ENCODE measurements at regions of chr9 and their contacts with region 1.

Region 1: GRCh38 chr9:77433675-77434445 is 214.3 kb downstream of the GNA14 start:
- DNase-seq: peak; percentile 33
- ATAC-seq: peak; percentile 99
- H3K4me3 ChIP-seq: no peak overlapping the region
- H3K27ac ChIP-seq: no peak overlapping the region
- H3K4me1 ChIP-seq: no peaks in the 10 kb centered on the region
- H3K27me3 ChIP-seq: no peaks in the 10 kb centered on the region
- CTCF ChIP-seq: peak; percentile 69 to 98 (median 98)
- POLR2A ChIP-seq: no peak
- RAD21 ChIP-seq: peak; percentile 90

Region 2: DNA sequence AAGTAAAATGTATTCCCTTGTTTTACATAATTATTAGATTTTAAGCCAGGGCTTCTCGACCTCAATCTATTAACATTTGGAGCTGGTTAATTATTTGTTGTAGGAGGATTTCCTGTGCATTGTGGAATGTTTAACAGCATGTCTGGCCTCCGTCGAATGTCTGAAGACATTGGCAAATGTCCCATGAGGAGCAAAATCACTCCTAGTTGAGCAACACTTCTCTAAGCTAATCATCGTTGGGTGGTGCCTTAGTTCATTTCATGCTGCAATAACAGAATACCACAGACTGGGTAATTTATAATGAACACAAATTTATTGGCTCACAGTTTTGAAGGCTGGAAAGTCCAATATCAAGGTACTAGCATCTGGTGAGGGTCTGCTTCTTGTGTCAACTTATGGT is 270.0 kb before region 1 on chr9:
- CTCF ChIA-PET with region 1: no interaction called
- POLR2A ChIA-PET with region 1: no interaction called
- RAD21 ChIA-PET with region 1: no interaction called
- intact Hi-C with region 1: loop called (anchors 10 kb)
- DNase-seq: no peak
- ATAC-seq: no peak
- H3K4me3 ChIP-seq: no peak overlapping the region
- H3K27ac ChIP-seq: no peak overlapping the region
- H3K4me1 ChIP-seq: no peaks in the 10 kb centered on the region
- H3K27me3 ChIP-seq: no peaks in the 10 kb centered on the region
- CTCF ChIP-seq: no peak
- POLR2A ChIP-seq: no peak
- RAD21 ChIP-seq: no peak

Region 3: DNA sequence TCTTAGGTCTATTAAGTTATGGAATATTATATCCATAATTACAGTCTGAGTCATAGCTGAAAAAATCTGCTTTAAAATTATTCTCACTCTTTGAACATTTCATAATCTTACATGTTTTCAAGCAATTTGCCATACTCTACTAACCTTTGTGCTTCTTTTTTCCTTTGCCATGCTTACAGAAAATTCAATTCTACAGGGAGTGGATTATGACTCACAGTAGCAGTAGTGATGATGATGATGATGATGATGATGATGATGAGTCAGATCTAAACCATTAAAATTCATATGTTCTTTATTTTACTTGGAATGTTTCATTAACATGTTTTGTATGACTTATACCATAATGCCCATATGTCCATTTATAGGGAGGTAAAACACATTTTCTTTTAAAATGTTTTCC is 49.5 kb before region 1 on chr9:
- CTCF ChIA-PET with region 1: no interaction called
- POLR2A ChIA-PET with region 1: no interaction called
- RAD21 ChIA-PET with region 1: no interaction called
- intact Hi-C with region 1: no loop called
- DNase-seq: no peak
- ATAC-seq: no peak
- H3K4me3 ChIP-seq: no peak overlapping the region
- H3K27ac ChIP-seq: no peak overlapping the region
- H3K4me1 ChIP-seq: no peaks in the 10 kb centered on the region
- H3K27me3 ChIP-seq: no peaks in the 10 kb centered on the region
- CTCF ChIP-seq: no peak
- POLR2A ChIP-seq: no peak
- RAD21 ChIP-seq: no peak

Region 4: DNA sequence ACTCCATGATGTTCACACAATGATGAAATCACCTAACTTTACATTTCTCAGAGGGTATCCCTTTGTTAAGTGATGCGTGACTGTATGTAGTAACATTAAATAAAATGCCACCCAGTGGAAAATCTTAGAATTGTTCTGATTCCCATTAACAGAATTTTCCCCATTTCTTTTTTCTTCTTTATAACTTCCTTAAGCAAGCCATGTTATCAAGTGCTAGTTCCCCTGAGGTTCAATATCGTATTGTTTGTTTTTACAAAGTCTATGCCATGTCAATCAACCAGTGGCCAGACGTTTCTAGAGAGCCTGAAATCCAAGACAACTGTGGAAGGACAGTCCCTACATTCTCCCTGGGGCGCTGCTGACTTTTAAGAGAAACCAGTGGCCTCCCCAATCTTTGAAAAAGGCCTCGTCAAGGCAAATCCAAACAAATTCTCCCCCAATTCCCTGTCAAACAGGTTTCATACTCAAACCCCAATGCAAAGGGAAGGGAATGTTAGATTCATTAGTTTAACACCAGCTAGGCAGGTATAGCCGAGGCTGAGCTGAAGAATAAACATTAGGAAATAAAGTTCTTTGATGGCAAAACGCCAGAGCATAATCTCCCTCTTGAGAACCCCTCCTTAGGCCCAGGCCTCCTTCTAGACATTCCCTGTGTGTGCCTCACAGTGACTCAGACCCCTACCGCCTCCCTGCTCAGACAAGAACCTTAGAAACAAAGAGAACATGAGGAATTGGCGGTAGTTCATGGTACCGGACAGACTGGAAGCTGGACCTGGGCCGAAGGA is 15.6 kb after region 1 on chr9:
- CTCF ChIA-PET with region 1: interaction called, 20 read pairs
- POLR2A ChIA-PET with region 1: no interaction called
- RAD21 ChIA-PET with region 1: no interaction called
- intact Hi-C with region 1: no loop called
- DNase-seq: no peak
- ATAC-seq: no peak; the same call in 1 of the 2 replicates
- H3K4me3 ChIP-seq: no peak overlapping the region
- H3K27ac ChIP-seq: no peak overlapping the region
- H3K4me1 ChIP-seq: no peaks in the 10 kb centered on the region
- H3K27me3 ChIP-seq: no peaks in the 10 kb centered on the region
- CTCF ChIP-seq: peak in 1 of 3 experiments; percentile 25; a peak in 2 of 6 replicates
- POLR2A ChIP-seq: no peak
- RAD21 ChIP-seq: no peak

Region 5: GRCh38 chr9:77488439-77489126 is 54.7 kb after region 1 on chr9:
- CTCF ChIA-PET with region 1: interaction called, 14 read pairs
- POLR2A ChIA-PET with region 1: no interaction called
- RAD21 ChIA-PET with region 1: no interaction called
- intact Hi-C with region 1: loop called (anchors 10 kb)
- DNase-seq: peak; percentile 7
- ATAC-seq: peak; percentile 77
- H3K4me3 ChIP-seq: no peak overlapping the region
- H3K27ac ChIP-seq: no peak overlapping the region
- H3K4me1 ChIP-seq: no peaks in the 10 kb centered on the region
- H3K27me3 ChIP-seq: no peaks in the 10 kb centered on the region
- CTCF ChIP-seq: peak; percentile 51 to 64 (median 56); a peak in 5 of 6 replicates
- POLR2A ChIP-seq: no peak
- RAD21 ChIP-seq: peak; percentile 70

Region 6: GRCh38 chr9:77751341-77752091 is 317.7 kb after region 1 on chr9:
- CTCF ChIA-PET with region 1: interaction called, 14 read pairs
- POLR2A ChIA-PET with region 1: no interaction called
- RAD21 ChIA-PET with region 1: interaction called in 1 of 2 experiments, 5 read pairs
- intact Hi-C with region 1: loop called (anchors 1 kb)
- DNase-seq: peak; percentile 12
- ATAC-seq: peak; percentile 72
- H3K4me3 ChIP-seq: no peak overlapping the region
- H3K27ac ChIP-seq: no peak overlapping the region
- H3K4me1 ChIP-seq: no peaks in the 10 kb centered on the region
- H3K27me3 ChIP-seq: no peaks in the 10 kb centered on the region
- CTCF ChIP-seq: peak; percentile 39 to 62 (median 46); a peak in 4 of 6 replicates
- POLR2A ChIP-seq: no peak
- RAD21 ChIP-seq: peak; percentile 66

Region 7: DNA sequence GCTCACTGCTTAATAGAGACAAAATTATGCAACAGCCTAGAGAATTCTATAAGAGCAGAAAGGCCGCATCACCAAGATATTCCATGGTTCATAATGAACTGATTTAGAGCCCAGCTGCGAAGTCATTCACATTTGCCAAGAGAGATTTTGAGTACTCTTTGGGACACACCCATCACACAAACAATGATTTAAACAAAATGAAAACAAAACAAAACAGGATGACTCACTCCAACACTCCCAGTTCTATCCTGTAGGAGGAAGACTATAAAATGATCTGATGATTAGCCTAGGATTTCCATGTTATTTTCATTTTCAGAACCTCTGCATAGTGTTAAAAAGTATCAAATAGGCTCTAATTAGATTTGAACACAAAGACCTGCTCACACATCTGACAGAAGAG is 360.0 kb after region 1 on chr9:
- CTCF ChIA-PET with region 1: no interaction called
- POLR2A ChIA-PET with region 1: no interaction called
- RAD21 ChIA-PET with region 1: no interaction called
- intact Hi-C with region 1: no loop called
- DNase-seq: peak; percentile 18
- ATAC-seq: peak; percentile 62; the same call in 1 of the 2 replicates
- H3K4me3 ChIP-seq: no peak overlapping the region
- H3K27ac ChIP-seq: no peak overlapping the region
- H3K4me1 ChIP-seq: peaks cover 9 to 10% of the 10 kb centered on the region in 2 experiments
- H3K27me3 ChIP-seq: no peaks in the 10 kb centered on the region
- CTCF ChIP-seq: peak in 1 of 3 experiments; percentile 19; a peak in 1 of 6 replicates
- POLR2A ChIP-seq: no peak
- RAD21 ChIP-seq: no peak

Region 8: DNA sequence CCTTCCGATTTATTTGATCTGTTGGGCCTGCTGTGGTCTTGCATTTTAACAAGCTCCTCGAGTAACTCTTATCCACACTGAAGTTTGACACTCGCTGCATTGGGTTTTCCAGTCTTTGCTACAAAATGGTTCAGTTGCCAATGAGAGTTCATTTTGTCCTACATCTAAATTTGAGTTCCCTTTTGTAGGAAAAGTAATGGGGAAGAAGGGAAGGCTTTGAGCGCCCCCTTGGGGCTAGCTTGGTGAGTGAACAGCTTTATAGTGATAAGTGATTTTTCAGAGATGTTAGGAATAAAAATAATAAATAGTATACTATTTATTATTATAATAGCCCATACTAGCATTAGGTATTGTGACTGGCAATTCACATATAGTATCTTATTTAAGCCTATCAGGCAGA is 687.6 kb after region 1 on chr9:
- CTCF ChIA-PET with region 1: interaction called, 8 read pairs
- POLR2A ChIA-PET with region 1: no interaction called
- RAD21 ChIA-PET with region 1: interaction called in 1 of 2 experiments, 3 read pairs
- intact Hi-C with region 1: loop called (anchors 2 kb)
- DNase-seq: peak; percentile 35
- ATAC-seq: peak; percentile 62; the same call in 1 of the 2 replicates
- H3K4me3 ChIP-seq: no peak overlapping the region
- H3K27ac ChIP-seq: no peak overlapping the region
- H3K4me1 ChIP-seq: no peaks in the 10 kb centered on the region
- H3K27me3 ChIP-seq: no peaks in the 10 kb centered on the region
- CTCF ChIP-seq: peak; percentile 61 to 80 (median 77)
- POLR2A ChIP-seq: no peak
- RAD21 ChIP-seq: peak; percentile 81

Region 9: GRCh38 chr9:78196258-78196657 is 762.4 kb after region 1 on chr9:
- CTCF ChIA-PET with region 1: no interaction called
- POLR2A ChIA-PET with region 1: no interaction called
- RAD21 ChIA-PET with region 1: no interaction called
- intact Hi-C with region 1: no loop called
- DNase-seq: no peak
- ATAC-seq: no peak
- H3K4me3 ChIP-seq: no peak overlapping the region
- H3K27ac ChIP-seq: no peak overlapping the region
- H3K4me1 ChIP-seq: no peaks in the 10 kb centered on the region
- H3K27me3 ChIP-seq: no peaks in the 10 kb centered on the region
- CTCF ChIP-seq: no peak
- POLR2A ChIP-seq: no peak
- RAD21 ChIP-seq: no peak

Region 10: DNA sequence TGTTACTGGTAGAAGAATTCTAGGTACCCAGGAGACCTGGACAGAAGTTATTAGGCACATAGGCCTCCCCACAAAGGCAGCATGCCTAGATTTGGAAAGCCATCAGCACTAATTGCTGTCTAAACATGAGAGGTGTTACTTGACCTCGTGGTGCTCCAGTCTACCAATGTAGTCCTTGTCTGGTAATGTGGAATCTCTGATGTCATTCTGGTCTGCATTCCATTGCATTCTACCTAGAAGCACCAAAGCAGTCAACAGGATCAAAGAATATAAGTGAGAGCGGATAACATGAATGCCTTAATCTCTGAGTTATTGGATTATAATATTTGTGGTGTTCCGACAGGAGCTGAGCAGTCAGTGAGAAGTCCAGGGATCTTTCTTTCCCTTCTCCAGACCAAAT is 1038.3 kb after region 1 on chr9:
- CTCF ChIA-PET with region 1: no interaction called
- POLR2A ChIA-PET with region 1: no interaction called
- RAD21 ChIA-PET with region 1: no interaction called
- intact Hi-C with region 1: no loop called
- DNase-seq: no peak
- ATAC-seq: no peak
- H3K4me3 ChIP-seq: no peak overlapping the region
- H3K27ac ChIP-seq: no peak overlapping the region
- H3K4me1 ChIP-seq: no peaks in the 10 kb centered on the region
- H3K27me3 ChIP-seq: no peaks in the 10 kb centered on the region
- CTCF ChIP-seq: no peak
- POLR2A ChIP-seq: no peak
- RAD21 ChIP-seq: no peak

Measured in HCT116 (cell line).